Heart right ventricle (tissue), 16 donors: ENCODE measurements at regions of chr20 and their contacts with region 1.

Region 1: GRCh38 chr20:45436732-45437391 is 20.9 kb downstream of the PIGT start:
- DNase-seq: peak; percentile 89 to 90
- ATAC-seq: peak; percentile 93 to 97 (median 96)
- H3K4me3 ChIP-seq: peak overlapping the region; percentile 36 to 79 (median 59)
- H3K27ac ChIP-seq: peak overlapping the region in 9 of 10 donors; percentile 55 to 86 (median 76)
- H3K4me1 ChIP-seq: peaks cover 0 to 16% (median 11%) of the 10 kb centered on the region in 9 donors
- H3K27me3 ChIP-seq: no peaks in the 10 kb centered on the region
- CTCF ChIP-seq: peak in 8 of 9 donors; percentile 94 to 98 (median 97)

Region 2: DNA sequence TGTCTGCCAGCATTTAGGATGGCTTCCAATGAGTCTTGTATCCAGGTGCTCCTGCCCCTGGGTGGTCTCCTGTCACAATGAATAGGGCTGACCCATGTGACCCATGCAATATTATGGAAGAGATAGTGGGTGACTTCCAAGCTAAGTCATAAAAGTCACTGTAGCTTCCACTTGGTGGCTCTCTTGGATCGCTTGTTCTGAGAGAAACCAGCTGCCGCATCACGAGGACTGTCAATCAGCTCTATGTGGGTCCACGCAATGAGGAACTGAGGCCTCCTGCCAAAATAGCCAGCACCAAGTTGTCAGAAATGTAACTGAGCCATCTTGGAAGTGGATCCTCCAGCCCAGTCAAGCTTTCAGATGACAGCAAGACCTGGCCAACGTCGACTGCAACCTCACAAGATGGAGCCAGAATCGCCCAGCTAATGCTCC is 113.9 kb before region 1 on chr20:
- intact Hi-C with region 1: loop called in 9 of 10 experiments (anchors 1 to 5 kb)
- DNase-seq: peak in 1 of 2 donors; percentile 62
- ATAC-seq: peak; percentile 68 to 85 (median 80)
- H3K4me3 ChIP-seq: no peak overlapping the region
- H3K27ac ChIP-seq: no peak overlapping the region
- H3K4me1 ChIP-seq: peaks cover 0 to 15% (median 0%) of the 10 kb centered on the region in 9 donors
- H3K27me3 ChIP-seq: peaks cover 0 to 3% (median 0%) of the 10 kb centered on the region in 7 donors
- CTCF ChIP-seq: peak in 8 of 9 donors; percentile 12 to 63 (median 48)